Ovary (tissue), 10 donors: ENCODE measurements at regions of chr1 and their contacts with region 1.

Region 1: GRCh38 chr1:109548321-109549267 is at the start of gene GNAI3:
- DNase-seq: peak; percentile 93 to 97 (median 95)
- H3K4me3 ChIP-seq: peak within 1 kb of the TSS; percentile 63
- H3K27ac ChIP-seq: peak within 1 kb of the TSS; percentile 69 to 71
- H3K4me1 ChIP-seq: peaks cover 4% of the 10 kb centered on the region
- H3K27me3 ChIP-seq: no peaks in the 10 kb centered on the region
- CTCF ChIP-seq: no peak
- EP300 ChIP-seq: no peak
- POLR2A ChIP-seq: peak; percentile 98
- total RNA-seq, gene GNAI3: 3.3 to 6.2 (median 4.8) TPM

Region 2: GRCh38 chr1:109412551-109412950 is 136.0 kb before region 1 on chr1:
- intact Hi-C with region 1: no loop called
- DNase-seq: no peak
- H3K4me3 ChIP-seq: no peak overlapping the region
- H3K27ac ChIP-seq: no peak overlapping the region
- H3K4me1 ChIP-seq: no peaks in the 10 kb centered on the region
- H3K27me3 ChIP-seq: no peaks in the 10 kb centered on the region
- CTCF ChIP-seq: no peak
- EP300 ChIP-seq: no peak
- POLR2A ChIP-seq: no peak

Region 3: GRCh38 chr1:109624201-109625010 is 75.8 kb after region 1 on chr1:
- intact Hi-C with region 1: loop called in 2 of 4 experiments (anchors 5 kb)
- DNase-seq: peak in 2 of 5 donors; percentile 23 to 40
- H3K4me3 ChIP-seq: no peak overlapping the region
- H3K27ac ChIP-seq: no peak overlapping the region
- H3K4me1 ChIP-seq: peaks cover 8% of the 10 kb centered on the region
- H3K27me3 ChIP-seq: no peaks in the 10 kb centered on the region
- CTCF ChIP-seq: no peak
- EP300 ChIP-seq: no peak
- POLR2A ChIP-seq: no peak

Region 4: DNA sequence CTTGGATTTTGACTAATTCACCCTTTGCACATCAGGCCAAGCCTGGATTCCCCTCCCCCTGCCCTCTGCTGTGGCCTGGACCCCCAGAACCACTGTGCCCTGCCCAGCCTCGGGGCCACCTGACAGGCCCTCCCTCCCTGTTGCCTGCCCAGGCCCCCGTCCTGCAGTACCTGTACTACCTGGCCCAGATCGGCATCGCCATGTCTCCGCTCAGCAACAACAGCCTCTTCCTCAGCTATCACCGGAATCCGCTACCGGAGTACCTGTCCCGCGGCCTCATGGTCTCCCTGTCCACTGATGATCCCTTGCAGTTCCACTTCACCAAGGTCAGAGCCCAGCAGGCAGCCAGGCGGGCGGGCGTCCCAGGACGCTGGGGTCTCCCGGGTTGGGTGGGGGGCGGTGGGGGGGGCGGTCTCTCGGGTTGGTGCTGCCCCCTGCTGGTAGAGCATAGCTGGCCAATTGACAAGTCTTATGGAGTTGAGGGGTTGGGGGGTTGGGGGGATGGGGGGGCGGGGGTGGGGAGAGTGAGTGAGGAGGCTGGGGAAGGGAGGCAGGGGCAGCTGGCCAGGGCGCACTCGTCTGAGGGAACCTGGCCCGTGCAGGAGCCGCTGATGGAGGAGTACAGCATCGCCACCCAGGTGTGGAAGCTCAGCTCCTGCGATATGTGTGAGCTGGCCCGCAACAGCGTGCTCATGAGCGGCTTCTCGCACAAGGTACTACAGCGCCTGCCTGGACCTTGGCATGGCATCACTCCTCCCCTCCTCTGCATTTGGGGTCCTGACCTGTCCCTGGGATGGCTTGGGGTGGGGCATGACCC is 81.7 kb after region 1 on chr1:
- intact Hi-C with region 1: loop called in 3 of 4 experiments (anchors 5 to 10 kb)
- DNase-seq: peak in 3 of 5 donors; percentile 33 to 45 (median 39)
- H3K4me3 ChIP-seq: no peak overlapping the region
- H3K27ac ChIP-seq: no peak overlapping the region
- H3K4me1 ChIP-seq: peaks cover 2% of the 10 kb centered on the region
- H3K27me3 ChIP-seq: no peaks in the 10 kb centered on the region
- CTCF ChIP-seq: no peak
- EP300 ChIP-seq: no peak
- POLR2A ChIP-seq: no peak

Region 5: GRCh38 chr1:109643385-109644230 is 95.0 kb after region 1 on chr1:
- intact Hi-C with region 1: loop called in 3 of 4 experiments (anchors 5 to 10 kb)
- DNase-seq: peak; percentile 75 to 92 (median 88)
- H3K4me3 ChIP-seq: no peak overlapping the region
- H3K27ac ChIP-seq: peak overlapping the region in 1 of 2 donors; percentile 35
- H3K4me1 ChIP-seq: no peaks in the 10 kb centered on the region
- H3K27me3 ChIP-seq: no peaks in the 10 kb centered on the region
- CTCF ChIP-seq: peak; percentile 63 to 87 (median 71)
- EP300 ChIP-seq: no peak
- POLR2A ChIP-seq: no peak

Region 6: GRCh38 chr1:109773146-109773899 is 224.7 kb after region 1 on chr1:
- intact Hi-C with region 1: loop called (anchors 2 to 10 kb)
- DNase-seq: peak; percentile 79 to 88 (median 84)
- H3K4me3 ChIP-seq: no peak overlapping the region
- H3K27ac ChIP-seq: no peak overlapping the region
- H3K4me1 ChIP-seq: no peaks in the 10 kb centered on the region
- H3K27me3 ChIP-seq: no peaks in the 10 kb centered on the region
- CTCF ChIP-seq: peak; percentile 71 to 90 (median 88)
- EP300 ChIP-seq: no peak
- POLR2A ChIP-seq: no peak